Right lobe of liver (tissue), 6 donors: ENCODE measurements at regions of chr4 and their contacts with region 1.

Region 1: GRCh38 chr4:119041951-119042560 is 93.6 kb upstream of the MYOZ2 start:
- DNase-seq: peak in 1 of 3 donors; percentile 61
- ATAC-seq: peak; percentile 95 to 96 (median 95)
- H3K4me3 ChIP-seq: no peak overlapping the region
- H3K27ac ChIP-seq: no peak overlapping the region
- H3K4me1 ChIP-seq: peaks cover 0 to 6% (median 0%) of the 10 kb centered on the region in 4 donors
- H3K27me3 ChIP-seq: no peaks in the 10 kb centered on the region
- CTCF ChIP-seq: peak; percentile 60 to 71 (median 67)
- POLR2A ChIP-seq: no peak

Region 2: GRCh38 chr4:118927974-118928373 is 114.1 kb before region 1 on chr4:
- intact Hi-C with region 1: no loop called
- DNase-seq: no peak
- ATAC-seq: no peak
- H3K4me3 ChIP-seq: no peak overlapping the region
- H3K27ac ChIP-seq: no peak overlapping the region
- H3K4me1 ChIP-seq: no peaks in the 10 kb centered on the region
- H3K27me3 ChIP-seq: no peaks in the 10 kb centered on the region
- CTCF ChIP-seq: no peak
- POLR2A ChIP-seq: no peak

Region 3: GRCh38 chr4:119103263-119103662 is 61.2 kb after region 1 on chr4:
- intact Hi-C with region 1: no loop called
- DNase-seq: no peak
- ATAC-seq: peak in 3 of 4 donors; percentile 61 to 88 (median 70)
- H3K4me3 ChIP-seq: no peak overlapping the region
- H3K27ac ChIP-seq: no peak overlapping the region
- H3K4me1 ChIP-seq: no peaks in the 10 kb centered on the region
- H3K27me3 ChIP-seq: no peaks in the 10 kb centered on the region
- CTCF ChIP-seq: no peak
- POLR2A ChIP-seq: no peak

Region 4: GRCh38 chr4:119233750-119234149 is 191.7 kb after region 1 on chr4:
- intact Hi-C with region 1: no loop called
- DNase-seq: no peak
- ATAC-seq: peak in 3 of 4 donors; percentile 28 to 37 (median 34)
- H3K4me3 ChIP-seq: no peak overlapping the region
- H3K27ac ChIP-seq: no peak overlapping the region
- H3K4me1 ChIP-seq: no peaks in the 10 kb centered on the region
- H3K27me3 ChIP-seq: no peaks in the 10 kb centered on the region
- CTCF ChIP-seq: no peak
- POLR2A ChIP-seq: no peak

Region 5: DNA sequence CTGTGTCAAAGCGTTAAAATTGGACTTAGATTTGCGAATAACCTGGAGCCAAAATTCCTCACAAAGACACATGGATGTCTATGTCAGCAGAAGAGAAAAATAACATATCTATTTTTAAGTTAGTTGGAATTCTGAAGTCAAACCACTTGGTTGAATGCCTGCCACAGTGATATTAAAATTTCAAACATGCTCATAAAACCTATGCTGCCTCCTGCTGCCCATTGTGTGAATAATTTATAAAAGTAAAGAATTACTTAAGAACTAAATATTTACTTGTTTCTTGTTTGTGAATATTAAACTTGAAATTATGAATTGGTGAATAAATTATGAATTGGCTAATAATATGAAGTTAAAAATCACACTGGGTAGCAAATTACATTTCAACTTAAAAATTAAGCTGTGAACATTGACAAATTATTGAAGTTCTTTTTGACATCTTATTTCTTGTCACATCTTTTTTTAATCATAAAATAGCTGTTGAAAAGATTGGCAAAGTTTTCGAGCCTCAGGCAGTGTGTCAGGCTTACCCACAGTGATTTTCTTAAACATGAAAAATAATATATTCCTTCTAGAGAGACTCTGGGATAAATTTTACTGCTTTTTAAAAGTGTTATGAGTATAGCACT is 244.4 kb after region 1 on chr4:
- intact Hi-C with region 1: loop called in 1 of 2 experiments (anchors 10 kb)
- DNase-seq: no peak
- ATAC-seq: peak; percentile 47 to 59 (median 50)
- H3K4me3 ChIP-seq: no peak overlapping the region
- H3K27ac ChIP-seq: no peak overlapping the region
- H3K4me1 ChIP-seq: peaks cover 0 to 17% (median 3%) of the 10 kb centered on the region in 4 donors
- H3K27me3 ChIP-seq: no peaks in the 10 kb centered on the region
- CTCF ChIP-seq: peak; percentile 53 to 63 (median 59)
- POLR2A ChIP-seq: no peak